Breast epithelium (tissue), 4 donors: ENCODE measurements at regions of chr3 and their contacts with region 1.

Region 1: GRCh38 chr3:195704433-195704998 is 16.3 kb upstream of the MUC20 start:
- DNase-seq: no peak
- H3K4me3 ChIP-seq: no peak overlapping the region
- H3K27ac ChIP-seq: no peak overlapping the region
- H3K4me1 ChIP-seq: no peaks in the 10 kb centered on the region
- H3K27me3 ChIP-seq: no peaks in the 10 kb centered on the region
- CTCF ChIP-seq: no peak
- POLR2A ChIP-seq: no peak

Region 2: DNA sequence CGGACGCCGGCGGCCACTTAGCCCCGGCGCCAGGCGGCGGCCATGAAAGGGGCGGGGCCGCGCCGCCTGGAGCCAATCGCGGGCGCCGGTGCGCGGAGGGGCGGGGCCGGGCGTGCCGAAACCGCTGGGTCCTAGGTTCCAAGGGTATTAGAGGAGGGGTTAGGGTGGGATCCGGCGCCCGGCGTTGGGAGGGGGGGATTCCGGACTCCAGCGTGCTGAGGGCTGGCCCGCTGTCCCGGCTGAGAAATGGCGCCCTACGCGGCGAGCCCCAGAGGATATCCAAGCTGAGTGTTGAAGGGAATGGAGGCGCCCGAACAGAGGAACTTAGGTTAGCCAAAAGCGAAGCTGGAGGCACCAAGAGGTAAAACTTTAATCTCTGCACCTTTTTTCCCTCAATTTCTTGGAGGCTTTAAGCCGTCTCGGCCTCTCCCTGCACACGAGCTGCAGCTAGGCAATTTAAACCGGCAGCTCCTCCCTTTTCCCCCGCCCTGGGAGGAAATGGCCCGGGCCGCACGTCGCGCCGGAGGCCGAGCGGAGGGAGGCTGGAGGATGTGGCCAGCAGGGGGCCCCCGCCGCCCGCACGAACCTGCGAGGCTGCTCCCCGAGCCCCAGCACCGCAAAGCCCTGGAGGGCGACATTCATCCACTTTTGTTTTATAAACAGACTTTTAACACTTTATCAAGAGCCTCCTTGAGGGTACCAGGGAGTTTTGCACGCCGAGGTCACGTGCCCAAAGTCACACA is 433.2 kb before region 1 on chr3 and contains the start of gene XXYLT1:
- intact Hi-C with region 1: no loop called
- DNase-seq: peak; percentile 63 to 83
- H3K4me3 ChIP-seq: peak within 1 kb of the TSS; percentile 63 to 95 (median 72)
- H3K27ac ChIP-seq: peak within 1 kb of the TSS; percentile 14 to 70
- H3K4me1 ChIP-seq: peaks cover 0 to 8% of the 10 kb centered on the region in 2 donors
- H3K27me3 ChIP-seq: no peaks in the 10 kb centered on the region
- CTCF ChIP-seq: peak; percentile 55 to 97 (median 91)
- POLR2A ChIP-seq: no peak
- total RNA-seq, gene XXYLT1: 7.2 to 13.0 (median 10.8) TPM

Region 3: DNA sequence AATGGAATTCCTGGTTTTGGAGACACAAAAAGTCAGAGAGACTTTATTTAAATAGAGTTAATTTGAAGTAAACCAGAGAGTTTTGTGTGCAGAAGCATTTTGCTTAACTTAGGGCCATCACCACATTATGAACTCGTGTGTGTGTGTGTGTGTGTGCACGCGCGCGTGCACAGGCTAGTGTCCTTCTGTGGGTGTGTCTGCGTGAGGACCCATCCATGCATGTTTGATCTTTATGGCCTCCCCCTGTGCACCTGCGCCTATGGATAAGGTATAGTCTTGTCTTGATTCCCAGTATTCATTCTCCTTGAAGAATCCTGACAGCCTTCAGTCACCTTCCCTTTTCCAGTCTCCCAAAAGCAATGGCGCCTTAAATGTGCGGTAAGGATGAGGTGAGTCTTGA is 42.2 kb after region 1 on chr3:
- intact Hi-C with region 1: loop called (anchors 1 kb)
- DNase-seq: no peak
- H3K4me3 ChIP-seq: no peak overlapping the region
- H3K27ac ChIP-seq: no peak overlapping the region
- H3K4me1 ChIP-seq: no peaks in the 10 kb centered on the region
- H3K27me3 ChIP-seq: no peaks in the 10 kb centered on the region
- CTCF ChIP-seq: no peak
- POLR2A ChIP-seq: no peak